Right cardiac atrium (tissue), 5 donors: ENCODE measurements at regions of chr5 and their contacts with region 1.

Region 1: GRCh38 chr5:59039296-59040023 is 456.6 kb downstream of the RAB3C start:
- DNase-seq: peak; percentile 92 to 95 (median 93)
- ATAC-seq: peak; percentile 82 to 86
- H3K4me3 ChIP-seq: peak overlapping the region; percentile 61
- H3K27ac ChIP-seq: peak overlapping the region; percentile 80
- H3K4me1 ChIP-seq: peaks cover 2% of the 10 kb centered on the region
- H3K27me3 ChIP-seq: no peaks in the 10 kb centered on the region

Region 2: GRCh38 chr5:59126708-59127573 is 87.5 kb after region 1 on chr5:
- intact Hi-C with region 1: loop called in 2 of 4 experiments (anchors 5 kb)
- DNase-seq: no peak
- ATAC-seq: no peak
- H3K4me3 ChIP-seq: peak overlapping the region; percentile 33
- H3K27ac ChIP-seq: peak overlapping the region; percentile 97
- H3K4me1 ChIP-seq: peaks cover 8% of the 10 kb centered on the region
- H3K27me3 ChIP-seq: no peaks in the 10 kb centered on the region

Region 3: DNA sequence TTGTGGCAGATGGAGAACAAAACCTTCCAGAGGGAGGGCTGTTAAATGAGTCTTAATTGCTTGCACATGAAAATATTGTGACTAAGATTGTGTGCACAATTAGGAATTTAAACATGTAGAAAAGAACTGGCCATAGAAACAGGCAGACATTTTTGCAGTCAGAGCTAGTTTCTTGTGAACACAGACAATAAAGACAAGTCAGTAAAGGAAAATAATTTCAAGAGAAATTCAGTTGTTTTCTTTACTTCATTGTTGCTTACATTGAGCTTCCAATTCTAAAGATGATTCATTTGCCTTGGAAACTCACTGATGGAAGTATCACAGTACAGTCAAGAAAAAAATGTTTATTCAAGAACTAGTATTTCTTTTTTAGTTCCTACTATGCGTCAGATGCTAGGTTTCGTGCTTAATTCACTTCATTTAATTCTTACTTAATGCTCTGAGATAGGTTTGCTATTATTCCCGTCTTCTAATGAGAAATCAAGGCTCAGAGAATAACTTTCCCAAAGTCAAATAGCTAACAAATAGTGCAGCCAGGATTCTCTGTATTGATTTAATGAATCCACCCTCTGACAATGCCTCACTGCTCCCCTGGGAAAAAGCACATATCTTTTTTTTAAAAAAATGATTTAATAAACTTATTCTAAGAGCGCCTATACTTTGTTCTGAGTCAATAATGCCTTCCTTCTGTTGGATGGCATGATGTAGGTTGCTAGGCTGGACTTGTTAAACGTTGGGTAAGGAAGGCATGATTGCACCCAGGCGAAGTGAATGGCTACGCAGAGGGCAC is 124.8 kb after region 1 on chr5:
- intact Hi-C with region 1: loop called in 1 of 4 experiments (anchors 5 kb)
- DNase-seq: no peak
- ATAC-seq: no peak
- H3K4me3 ChIP-seq: no peak overlapping the region
- H3K27ac ChIP-seq: no peak overlapping the region
- H3K4me1 ChIP-seq: peaks cover 3% of the 10 kb centered on the region
- H3K27me3 ChIP-seq: no peaks in the 10 kb centered on the region

Region 4: DNA sequence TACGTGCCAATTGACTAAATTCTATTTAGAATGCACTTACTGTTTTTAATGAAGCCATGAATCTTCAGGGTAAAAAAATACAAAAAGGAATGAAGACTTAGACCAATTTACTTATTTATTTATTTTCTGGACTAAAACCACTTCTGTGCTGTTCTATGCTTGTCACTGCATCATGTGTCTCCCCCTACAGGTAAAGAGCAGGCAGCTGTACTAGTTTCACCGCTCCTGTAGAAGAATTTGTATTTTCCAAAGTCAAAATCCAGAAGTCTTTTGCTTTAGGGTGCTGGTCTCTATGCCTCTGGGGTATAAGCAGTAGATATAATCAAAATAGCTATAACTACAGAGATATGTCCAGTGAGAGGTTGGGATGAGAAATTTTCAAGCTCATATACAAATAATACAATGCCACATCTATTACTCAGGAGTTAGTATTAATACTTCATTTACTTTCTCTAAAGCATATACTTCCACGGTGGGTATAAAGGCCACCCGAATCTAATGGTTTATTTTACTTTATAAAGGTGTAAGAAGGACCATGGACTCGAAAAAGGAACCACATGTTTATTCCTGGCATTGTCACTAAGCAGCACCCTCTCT is 134.9 kb after region 1 on chr5:
- intact Hi-C with region 1: loop called in 2 of 4 experiments (anchors 5 kb)
- DNase-seq: no peak
- ATAC-seq: peak; percentile 83
- H3K4me3 ChIP-seq: no peak overlapping the region
- H3K27ac ChIP-seq: no peak overlapping the region
- H3K4me1 ChIP-seq: peaks cover 2% of the 10 kb centered on the region
- H3K27me3 ChIP-seq: no peaks in the 10 kb centered on the region

Region 5: DNA sequence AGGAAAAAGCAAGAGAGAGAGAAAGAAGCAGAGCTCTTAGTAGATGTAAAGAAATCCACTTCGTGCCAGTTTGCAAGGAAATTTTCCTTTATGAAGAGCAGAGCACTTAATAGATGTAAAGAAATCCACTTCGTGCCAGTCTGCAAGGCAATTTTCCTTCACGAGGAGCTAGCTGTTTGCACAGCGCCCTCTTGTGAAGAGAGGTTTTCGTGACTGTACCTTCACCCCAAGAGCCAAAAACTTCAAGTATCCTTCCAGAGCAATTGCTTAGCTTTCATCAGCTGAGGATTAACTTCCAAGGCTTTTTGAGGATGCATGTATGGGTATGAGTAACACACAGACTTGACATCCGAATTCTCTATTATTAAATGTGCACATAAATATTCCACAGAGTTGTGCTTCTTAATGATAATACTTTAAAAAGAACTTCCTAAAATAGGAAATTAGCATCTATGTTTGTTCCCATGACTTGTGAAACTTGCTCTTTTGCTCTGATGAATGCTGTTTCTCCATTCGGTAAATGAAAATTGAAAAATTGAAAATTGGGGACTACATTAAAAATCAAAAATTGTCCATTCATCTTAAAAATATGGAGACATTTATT is 328.4 kb after region 1 on chr5:
- intact Hi-C with region 1: loop called in 1 of 4 experiments (anchors 10 kb)
- DNase-seq: peak; percentile 51 to 72 (median 56)
- ATAC-seq: peak; percentile 68 to 78
- H3K4me3 ChIP-seq: no peak overlapping the region
- H3K27ac ChIP-seq: no peak overlapping the region
- H3K4me1 ChIP-seq: no peaks in the 10 kb centered on the region
- H3K27me3 ChIP-seq: no peaks in the 10 kb centered on the region